Gastrocnemius medialis (tissue), 4 donors: ENCODE measurements at regions of chr7 and their contacts with region 1.

Region 1: DNA sequence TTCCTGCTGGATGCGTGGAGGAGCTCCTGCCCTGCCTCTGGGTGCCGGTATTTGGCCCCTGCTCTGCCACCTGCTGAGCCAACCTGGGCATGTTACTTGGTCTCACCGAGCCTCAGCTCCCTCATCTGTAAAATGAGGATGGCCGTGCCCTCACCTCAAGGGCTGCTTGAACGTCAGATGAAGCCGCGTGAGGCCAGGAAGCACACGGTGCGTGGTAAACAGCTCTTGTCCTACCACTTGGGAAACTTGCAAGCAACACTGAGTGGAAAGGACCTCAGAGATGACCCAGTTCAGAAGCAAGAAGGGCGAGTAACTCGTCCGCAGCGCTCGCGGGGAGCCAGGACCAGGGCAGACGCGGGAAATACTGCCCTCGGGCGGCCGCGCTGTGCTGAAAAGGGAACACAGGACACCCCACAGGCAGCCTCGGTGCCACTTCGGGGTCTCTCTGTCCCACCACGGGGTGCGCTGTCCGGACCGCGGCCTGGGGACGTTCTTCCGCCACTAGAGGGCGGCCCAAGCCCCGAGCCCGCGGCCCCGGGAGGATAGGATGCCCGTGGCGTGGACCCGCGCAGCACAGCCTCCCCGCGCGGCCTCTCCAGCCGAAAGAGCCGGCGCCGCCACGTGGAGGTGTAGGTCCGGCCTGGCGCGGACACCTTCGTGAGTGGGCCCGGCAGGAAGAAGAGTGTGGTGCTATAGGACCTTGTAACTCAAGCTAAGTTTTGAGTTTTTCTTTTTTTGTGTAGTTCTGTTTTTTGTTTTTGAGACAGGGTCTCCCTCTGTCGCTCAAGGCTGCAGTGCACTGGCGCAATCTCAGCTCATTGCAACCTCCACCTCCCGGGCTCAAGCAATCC is 94.1 kb downstream of the PRKAG2 start:
- DNase-seq: peak; percentile 28 to 56
- ATAC-seq: peak; percentile 70 to 74
- H3K4me3 ChIP-seq: peak overlapping the region; percentile 10 to 45 (median 36)
- H3K27ac ChIP-seq: peak overlapping the region in 1 of 4 donors; percentile 6
- H3K4me1 ChIP-seq: peaks cover 0 to 9% of the 10 kb centered on the region in 2 donors
- H3K27me3 ChIP-seq: no peaks in the 10 kb centered on the region
- CTCF ChIP-seq: peak; percentile 76 to 92 (median 82)
- POLR2A ChIP-seq: no peak

Region 2: DNA sequence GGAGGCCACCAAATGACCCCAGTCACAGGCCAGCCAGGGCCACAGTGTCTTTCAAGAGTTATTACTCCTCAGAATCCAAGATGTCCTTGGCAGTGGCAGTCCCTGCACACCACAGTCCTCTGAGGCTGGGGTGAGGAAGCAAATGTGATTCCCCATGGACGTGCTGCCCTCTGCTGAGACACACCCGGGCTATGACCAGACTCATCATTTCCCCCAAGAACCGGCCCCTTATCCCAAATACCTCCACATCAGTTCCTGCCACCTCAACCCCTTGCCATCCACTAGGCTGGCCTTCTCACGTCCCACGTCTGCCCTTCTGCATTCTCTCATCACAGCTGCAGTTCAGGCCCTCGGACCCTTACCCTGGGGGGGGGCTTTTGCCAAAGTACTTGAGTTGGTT is 89.1 kb after region 1 on chr7:
- in situ Hi-C with region 1: no loop called
- intact Hi-C with region 1: loop called (anchors 2 kb)
- DNase-seq: no peak
- ATAC-seq: no peak
- H3K4me3 ChIP-seq: no peak overlapping the region
- H3K27ac ChIP-seq: no peak overlapping the region
- H3K4me1 ChIP-seq: peaks cover 8 to 12% of the 10 kb centered on the region in 2 donors
- H3K27me3 ChIP-seq: no peaks in the 10 kb centered on the region
- CTCF ChIP-seq: no peak
- POLR2A ChIP-seq: no peak

Region 3: DNA sequence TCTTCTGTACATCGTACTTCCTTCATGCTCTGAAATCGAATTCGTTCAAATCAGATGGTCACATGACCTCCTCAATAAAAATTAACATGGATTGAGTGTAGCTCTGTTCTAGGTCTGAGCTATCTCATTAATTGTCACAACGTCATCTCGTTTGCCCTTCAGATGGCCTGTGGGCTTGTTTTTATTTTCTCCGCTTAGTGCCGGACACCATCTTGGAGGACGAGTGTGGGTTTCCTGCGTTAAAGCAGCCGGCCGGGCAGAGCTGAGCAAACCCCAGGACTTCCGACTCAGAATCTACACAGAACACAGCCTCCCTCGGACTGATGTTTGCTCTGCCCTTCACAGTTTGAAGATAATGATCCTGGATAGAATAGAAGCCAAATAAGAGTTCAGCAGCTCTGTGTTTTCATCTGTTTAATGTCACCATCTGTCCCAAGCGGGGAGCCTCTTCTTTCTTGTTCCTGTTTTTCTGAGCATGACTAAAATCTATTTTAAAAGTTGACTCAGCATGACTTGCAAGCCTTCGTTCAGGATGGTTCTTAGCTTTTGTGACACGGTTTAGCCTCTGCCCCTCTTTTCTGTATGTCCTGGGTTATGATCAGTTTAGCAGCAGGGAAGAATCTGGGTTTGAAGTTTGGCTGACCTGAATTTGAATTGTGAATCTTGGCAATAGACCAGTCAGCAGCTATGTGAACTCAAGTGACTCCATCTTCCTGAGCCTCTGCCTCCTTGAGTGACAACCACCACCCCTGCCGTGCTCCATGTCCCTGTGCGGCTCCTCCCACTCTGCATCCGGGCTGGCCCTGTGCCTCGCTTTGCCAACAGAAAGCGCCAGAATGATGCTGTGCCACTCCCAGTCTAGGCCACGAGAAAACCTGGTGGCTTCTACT is 142.9 kb after region 1 on chr7:
- in situ Hi-C with region 1: loop called in 1 of 4 experiments (anchors 25 kb)
- intact Hi-C with region 1: no loop called
- DNase-seq: peak; percentile 49 to 69
- ATAC-seq: peak; percentile 72 to 83
- H3K4me3 ChIP-seq: peak overlapping the region in 1 of 4 donors; percentile 4
- H3K27ac ChIP-seq: peak overlapping the region in 3 of 4 donors; percentile 55 to 69 (median 62)
- H3K4me1 ChIP-seq: peaks cover 0 to 10% of the 10 kb centered on the region in 2 donors
- H3K27me3 ChIP-seq: no peaks in the 10 kb centered on the region
- CTCF ChIP-seq: no peak
- POLR2A ChIP-seq: peak in 1 of 2 donors; percentile 31

Region 4: DNA sequence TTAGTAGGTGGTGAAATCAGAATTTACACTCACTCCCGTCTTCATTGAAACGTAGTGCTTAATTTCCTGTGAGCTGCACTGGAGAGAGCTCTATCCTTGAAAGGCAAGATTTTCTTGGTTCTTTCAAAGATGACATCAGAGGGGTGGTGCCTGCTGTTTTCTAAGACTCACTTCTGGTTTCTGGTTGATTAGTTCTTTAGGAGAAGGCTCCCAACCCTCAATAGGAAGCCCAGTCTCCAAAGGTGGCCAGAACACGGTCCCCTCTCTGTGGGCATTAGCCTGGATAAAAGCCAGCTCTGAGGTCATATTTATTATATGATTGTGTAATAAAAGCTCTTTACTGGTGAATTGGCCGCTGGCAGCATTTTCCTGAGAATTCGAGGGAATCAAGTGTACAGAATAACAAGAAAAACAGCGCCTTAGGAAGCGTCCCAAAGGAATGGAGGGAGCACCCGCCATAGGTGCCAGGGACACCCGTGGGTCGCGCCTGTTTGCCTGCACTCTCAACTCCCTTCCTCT is 149.6 kb after region 1 on chr7:
- in situ Hi-C with region 1: loop called in 1 of 4 experiments (anchors 25 kb)
- intact Hi-C with region 1: loop called (anchors 2 kb)
- DNase-seq: peak in 1 of 2 donors; percentile 12
- ATAC-seq: peak; percentile 59 to 80
- H3K4me3 ChIP-seq: no peak overlapping the region
- H3K27ac ChIP-seq: peak overlapping the region; percentile 6 to 49 (median 31)
- H3K4me1 ChIP-seq: no peaks in the 10 kb centered on the region
- H3K27me3 ChIP-seq: peaks cover 0 to 11% (median 0%) of the 10 kb centered on the region in 3 donors
- CTCF ChIP-seq: no peak
- POLR2A ChIP-seq: peak; percentile 24 to 47

Region 5: GRCh38 chr7:151992375-151992774 is 209.6 kb after region 1 on chr7:
- in situ Hi-C with region 1: no loop called
- intact Hi-C with region 1: loop called (anchors 10 kb)
- DNase-seq: peak; percentile 22 to 28
- ATAC-seq: peak in 1 of 2 donors; percentile 56
- H3K4me3 ChIP-seq: no peak overlapping the region
- H3K27ac ChIP-seq: no peak overlapping the region
- H3K4me1 ChIP-seq: no peaks in the 10 kb centered on the region
- H3K27me3 ChIP-seq: no peaks in the 10 kb centered on the region
- CTCF ChIP-seq: no peak
- POLR2A ChIP-seq: no peak